Transverse colon (tissue), 4 donors: ENCODE measurements at regions of chr12 and their contacts with region 1.

Region 1: GRCh38 chr12:92561543-92561899 is 141.3 kb upstream of the PLEKHG7 start:
- DNase-seq: peak; percentile 35
- H3K4me3 ChIP-seq: no peak overlapping the region
- H3K27ac ChIP-seq: peak overlapping the region; percentile 37 to 69 (median 65)
- H3K4me1 ChIP-seq: peaks cover 0 to 20% (median 8%) of the 10 kb centered on the region in 4 donors
- H3K27me3 ChIP-seq: no peaks in the 10 kb centered on the region
- CTCF ChIP-seq: no peak
- EP300 ChIP-seq: no peak
- POLR2A ChIP-seq: no peak

Region 2: GRCh38 chr12:92244036-92244435 is 317.5 kb before region 1 on chr12:
- in situ Hi-C with region 1: no loop called
- intact Hi-C with region 1: loop called (anchors 10 kb)
- DNase-seq: no peak
- H3K4me3 ChIP-seq: no peak overlapping the region
- H3K27ac ChIP-seq: peak overlapping the region; percentile 47 to 72 (median 66)
- H3K4me1 ChIP-seq: peaks cover 0 to 18% (median 0%) of the 10 kb centered on the region in 4 donors
- H3K27me3 ChIP-seq: no peaks in the 10 kb centered on the region
- CTCF ChIP-seq: no peak
- EP300 ChIP-seq: peak; percentile 55
- POLR2A ChIP-seq: no peak

Region 3: GRCh38 chr12:92466391-92467305 is 94.9 kb before region 1 on chr12:
- in situ Hi-C with region 1: loop called in 1 of 4 experiments (anchors 10 kb)
- intact Hi-C with region 1: no loop called
- DNase-seq: peak; percentile 53
- H3K4me3 ChIP-seq: no peak overlapping the region
- H3K27ac ChIP-seq: peak overlapping the region; percentile 6 to 74 (median 62)
- H3K4me1 ChIP-seq: peaks cover 0 to 14% (median 3%) of the 10 kb centered on the region in 4 donors
- H3K27me3 ChIP-seq: no peaks in the 10 kb centered on the region
- CTCF ChIP-seq: no peak
- EP300 ChIP-seq: no peak
- POLR2A ChIP-seq: peak; percentile 48